ENCODE measurements at regions of chr13 and their contacts with region 1.

Region 1: DNA sequence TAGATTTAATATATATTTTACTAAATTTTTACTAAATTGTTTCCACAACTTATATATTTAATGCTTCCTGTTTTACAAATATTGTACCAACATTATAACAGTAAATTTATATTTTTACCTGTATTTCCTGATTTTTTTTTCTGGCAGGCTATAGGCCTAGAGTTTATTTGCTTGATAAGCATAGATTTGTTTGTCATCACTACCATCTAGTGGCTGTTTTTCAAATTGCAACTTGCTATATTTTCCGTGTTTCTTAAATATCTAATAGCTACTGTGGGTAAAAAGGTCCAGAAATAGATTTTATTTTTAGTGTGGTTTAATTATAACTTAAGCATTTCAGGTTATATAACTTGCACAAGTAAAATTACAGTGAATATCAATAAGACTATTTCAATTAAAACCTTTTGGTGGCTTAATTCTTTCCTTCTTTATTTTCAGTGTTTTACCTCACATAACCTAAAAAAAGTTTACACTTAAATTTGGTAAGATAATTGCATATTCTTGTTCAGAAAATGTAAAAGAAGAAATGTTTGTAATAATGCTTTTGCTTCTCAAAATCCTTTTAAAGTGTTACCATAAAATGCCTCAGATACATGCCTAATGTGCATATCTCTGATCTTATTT is 60.6 kb downstream of the NDFIP2 start:
- H3K4me3 ChIP-seq: no peak overlapping the region
- H3K27ac ChIP-seq: no peak overlapping the region
- H3K4me1 ChIP-seq: no peaks in the 10 kb centered on the region
- CTCF ChIP-seq: 0 out of 2 replicates have a peak, but pooled peaks have one; percentile 20

Region 2: DNA sequence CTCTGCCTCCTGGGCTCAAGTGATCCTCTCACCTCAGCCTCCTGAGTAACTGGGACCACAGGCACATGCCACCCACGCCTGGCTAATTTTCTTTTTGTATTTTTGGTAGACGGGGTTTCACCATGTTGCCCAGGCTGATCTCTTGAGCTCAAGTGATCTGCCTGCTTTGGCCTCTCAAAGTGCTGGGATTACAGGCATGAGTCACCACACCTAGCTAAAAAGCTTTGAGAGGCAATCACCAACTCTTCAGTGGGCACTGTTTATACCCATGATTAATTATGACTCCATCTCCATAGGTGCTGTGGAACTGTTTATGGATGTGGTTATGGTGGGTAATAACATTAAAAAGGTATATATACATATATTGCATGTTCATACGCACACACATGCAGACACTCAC is 128.0 kb before region 1 on chr13:
- CTCF ChIA-PET with region 1: interaction called, 10 read pairs
- POLR2A ChIA-PET with region 1: no interaction called
- H3K4me3 ChIP-seq: no peak overlapping the region
- H3K27ac ChIP-seq: no peak overlapping the region
- H3K4me1 ChIP-seq: no peaks in the 10 kb centered on the region
- CTCF ChIP-seq: no peak